HCT116 (cell line): ENCODE measurements at regions of chr3 and their contacts with region 1.

Region 1: DNA sequence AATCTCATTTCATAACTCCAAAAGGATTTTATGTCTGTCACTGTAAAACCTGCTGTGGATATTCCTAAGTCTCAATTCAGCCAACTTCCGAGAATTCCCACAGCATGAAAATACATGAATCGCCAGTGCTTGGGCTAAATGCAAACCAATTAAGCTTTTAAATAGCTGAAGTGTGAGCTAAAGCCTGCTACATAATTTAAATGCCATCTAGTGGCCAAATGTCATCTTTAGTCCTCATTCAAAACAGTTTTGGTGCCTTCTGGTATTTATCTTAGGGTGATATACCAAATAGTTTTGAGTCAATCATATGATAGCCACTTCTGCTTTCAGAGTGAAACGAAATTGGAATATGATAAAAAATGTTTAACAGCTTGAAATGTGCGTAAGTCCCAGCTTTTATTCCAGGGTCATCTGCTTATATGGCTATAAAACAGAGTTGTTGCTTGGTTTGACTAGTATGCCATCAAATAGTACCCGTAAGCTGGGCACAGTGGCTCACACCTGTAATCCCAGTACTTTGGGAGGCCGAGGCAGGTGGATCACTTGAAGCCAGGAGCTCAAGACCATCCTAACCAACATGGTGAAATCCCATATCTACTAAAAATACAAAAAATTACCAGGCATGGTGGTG is 41.8 kb upstream of the CCNL1 start:
- DNase-seq: peak; percentile 19
- ATAC-seq: peak; percentile 73
- H3K4me3 ChIP-seq: no peak overlapping the region
- H3K27ac ChIP-seq: no peak overlapping the region
- H3K4me1 ChIP-seq: no peaks in the 10 kb centered on the region
- H3K27me3 ChIP-seq: no peaks in the 10 kb centered on the region
- CTCF ChIP-seq: peak; percentile 44 to 65 (median 64); a peak in 5 of 6 replicates
- POLR2A ChIP-seq: no peak
- RAD21 ChIP-seq: peak; percentile 65

Region 2: DNA sequence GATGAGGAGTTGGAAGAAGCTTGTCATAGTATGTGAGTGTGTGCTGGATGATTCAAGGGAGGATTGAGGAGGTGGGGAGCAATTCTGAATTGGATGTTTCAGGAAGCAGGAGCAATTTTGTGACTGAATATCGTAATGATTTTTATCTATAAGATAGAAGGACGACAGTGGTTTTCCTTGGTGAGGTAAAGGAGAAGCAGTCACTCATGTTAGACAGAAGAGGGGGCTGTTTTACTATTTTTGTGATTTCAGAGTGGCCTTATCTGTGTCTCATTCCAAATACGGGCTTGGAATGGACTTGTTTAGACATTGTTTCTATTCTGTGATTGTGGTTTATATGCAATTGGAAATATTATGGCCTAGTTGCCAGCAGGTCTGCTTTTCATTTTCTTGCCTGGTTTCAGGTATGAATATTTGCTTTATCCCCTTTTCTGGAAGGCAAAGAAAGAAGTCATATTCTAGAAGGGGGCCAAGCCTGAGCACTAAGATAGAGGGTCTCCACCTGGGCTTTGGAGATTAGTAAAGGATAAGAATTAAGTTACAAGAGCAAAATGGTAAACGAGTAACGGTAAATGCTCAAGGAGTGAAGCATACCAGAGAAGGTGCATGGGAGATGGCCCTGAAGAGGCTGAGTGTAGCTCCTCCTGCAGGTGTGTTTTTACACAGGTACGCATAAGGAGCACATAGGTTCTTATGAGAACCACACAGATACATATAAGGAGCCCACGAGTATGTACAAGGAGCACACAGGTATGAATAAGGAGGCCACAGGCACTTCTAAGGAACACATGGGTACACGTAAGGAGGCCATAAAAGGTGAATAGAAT is 1206.0 kb before region 1 on chr3:
- CTCF ChIA-PET with region 1: interaction called, 3 read pairs
- POLR2A ChIA-PET with region 1: no interaction called
- RAD21 ChIA-PET with region 1: no interaction called
- intact Hi-C with region 1: loop called (anchors 5 kb)
- DNase-seq: peak; percentile 54
- ATAC-seq: peak; percentile 97
- H3K4me3 ChIP-seq: no peak overlapping the region
- H3K27ac ChIP-seq: no peak overlapping the region
- H3K4me1 ChIP-seq: peaks cover 0 to 5% of the 10 kb centered on the region in 2 experiments; a peak in 1 of 4 replicates
- H3K27me3 ChIP-seq: no peaks in the 10 kb centered on the region
- CTCF ChIP-seq: peak; percentile 56 to 70 (median 66)
- POLR2A ChIP-seq: no peak
- RAD21 ChIP-seq: peak; percentile 78

Region 3: GRCh38 chr3:156445117-156446090 is 756.4 kb before region 1 on chr3:
- CTCF ChIA-PET with region 1: no interaction called
- POLR2A ChIA-PET with region 1: no interaction called
- RAD21 ChIA-PET with region 1: no interaction called
- intact Hi-C with region 1: no loop called
- DNase-seq: no peak
- ATAC-seq: no peak
- H3K4me3 ChIP-seq: no peak overlapping the region
- H3K27ac ChIP-seq: no peak overlapping the region
- H3K4me1 ChIP-seq: no peaks in the 10 kb centered on the region
- H3K27me3 ChIP-seq: no peaks in the 10 kb centered on the region
- CTCF ChIP-seq: no peak
- POLR2A ChIP-seq: no peak
- RAD21 ChIP-seq: no peak

Region 4: GRCh38 chr3:157077565-157077991 is 124.2 kb before region 1 on chr3:
- CTCF ChIA-PET with region 1: no interaction called
- POLR2A ChIA-PET with region 1: no interaction called
- RAD21 ChIA-PET with region 1: no interaction called
- intact Hi-C with region 1: no loop called
- DNase-seq: no peak
- ATAC-seq: no peak
- H3K4me3 ChIP-seq: no peak overlapping the region
- H3K27ac ChIP-seq: no peak overlapping the region
- H3K4me1 ChIP-seq: peaks cover 4 to 29% of the 10 kb centered on the region in 2 experiments; a peak in 3 of 4 replicates
- H3K27me3 ChIP-seq: no peaks in the 10 kb centered on the region
- CTCF ChIP-seq: 0 out of 6 replicates have a peak, but pooled peaks of 1 of the 3 experiments have one; percentile 12
- POLR2A ChIP-seq: no peak
- RAD21 ChIP-seq: 0 out of 2 replicates have a peak, but pooled peaks have one; percentile 18

Region 5: GRCh38 chr3:157159762-157160657 is 41.8 kb before region 1 on chr3 and contains the start of gene CCNL1:
- CTCF ChIA-PET with region 1: interaction called, 18 read pairs
- POLR2A ChIA-PET with region 1: interaction called, 9 read pairs
- RAD21 ChIA-PET with region 1: interaction called, 3 to 4 read pairs
- intact Hi-C with region 1: no loop called
- DNase-seq: peak; percentile 96
- ATAC-seq: peak; percentile 89
- H3K4me3 ChIP-seq: peak within 1 kb of the TSS; percentile 81 to 88
- H3K27ac ChIP-seq: peak within 1 kb of the TSS; percentile 80
- H3K4me1 ChIP-seq: peaks cover 11 to 21% of the 10 kb centered on the region in 2 experiments
- H3K27me3 ChIP-seq: no peaks in the 10 kb centered on the region
- CTCF ChIP-seq: no peak
- POLR2A ChIP-seq: peak; percentile 99
- RAD21 ChIP-seq: no peak
- total RNA-seq, gene CCNL1: 96.7 TPM

Region 6: GRCh38 chr3:157239082-157239704 is 37.4 kb after region 1 on chr3:
- CTCF ChIA-PET with region 1: interaction called, 5 read pairs
- POLR2A ChIA-PET with region 1: no interaction called
- RAD21 ChIA-PET with region 1: no interaction called
- intact Hi-C with region 1: loop called (anchors 2 kb)
- DNase-seq: peak; percentile 46
- ATAC-seq: peak; percentile 100
- H3K4me3 ChIP-seq: no peak overlapping the region
- H3K27ac ChIP-seq: no peak overlapping the region
- H3K4me1 ChIP-seq: no peaks in the 10 kb centered on the region
- H3K27me3 ChIP-seq: no peaks in the 10 kb centered on the region
- CTCF ChIP-seq: peak; percentile 57 to 95 (median 87); a peak in 5 of 6 replicates
- POLR2A ChIP-seq: no peak
- RAD21 ChIP-seq: peak; percentile 82

Region 7: GRCh38 chr3:157447026-157447694 is 245.4 kb after region 1 on chr3:
- CTCF ChIA-PET with region 1: no interaction called
- POLR2A ChIA-PET with region 1: no interaction called
- RAD21 ChIA-PET with region 1: no interaction called
- intact Hi-C with region 1: loop called (anchors 1 kb)
- DNase-seq: peak; percentile 4
- ATAC-seq: no peak
- H3K4me3 ChIP-seq: no peak overlapping the region
- H3K27ac ChIP-seq: no peak overlapping the region
- H3K4me1 ChIP-seq: no peaks in the 10 kb centered on the region
- H3K27me3 ChIP-seq: no peaks in the 10 kb centered on the region
- CTCF ChIP-seq: peak; percentile 38 to 45 (median 39); a peak in 5 of 6 replicates
- POLR2A ChIP-seq: no peak
- RAD21 ChIP-seq: peak; percentile 61

Region 8: GRCh38 chr3:157493627-157494550 is 292.1 kb after region 1 on chr3:
- CTCF ChIA-PET with region 1: interaction called, 7 read pairs
- POLR2A ChIA-PET with region 1: no interaction called
- RAD21 ChIA-PET with region 1: interaction called, 3 read pairs
- intact Hi-C with region 1: loop called (anchors 1 kb)
- DNase-seq: peak; percentile 44
- ATAC-seq: peak; percentile 69
- H3K4me3 ChIP-seq: no peak overlapping the region
- H3K27ac ChIP-seq: no peak overlapping the region
- H3K4me1 ChIP-seq: peaks cover 1 to 5% of the 10 kb centered on the region in 2 experiments; a peak in 3 of 4 replicates
- H3K27me3 ChIP-seq: no peaks in the 10 kb centered on the region
- CTCF ChIP-seq: peak; percentile 61 to 77 (median 67)
- POLR2A ChIP-seq: no peak
- RAD21 ChIP-seq: peak; percentile 78

Region 9: GRCh38 chr3:157572559-157573270 is 371.0 kb after region 1 on chr3:
- CTCF ChIA-PET with region 1: interaction called, 16 read pairs
- POLR2A ChIA-PET with region 1: no interaction called
- RAD21 ChIA-PET with region 1: interaction called in 1 of 2 experiments, 5 read pairs
- intact Hi-C with region 1: loop called (anchors 2 kb)
- DNase-seq: peak; percentile 50
- ATAC-seq: peak; percentile 95
- H3K4me3 ChIP-seq: no peak overlapping the region
- H3K27ac ChIP-seq: no peak overlapping the region
- H3K4me1 ChIP-seq: no peaks in the 10 kb centered on the region
- H3K27me3 ChIP-seq: no peaks in the 10 kb centered on the region
- CTCF ChIP-seq: peak; percentile 56 to 93 (median 65); a peak in 5 of 6 replicates
- POLR2A ChIP-seq: no peak
- RAD21 ChIP-seq: peak; percentile 69